GM10248 (cell line): ENCODE measurements at regions of chr9 and their contacts with region 1.

Region 1: GRCh38 chr9:114291064-114291474 is 31.8 kb upstream of the ORM1 start:
- DNase-seq: peak; percentile 76
- CTCF ChIP-seq: peak; percentile 93

Region 2: GRCh38 chr9:114108016-114108833 is 182.8 kb before region 1 on chr9:
- CTCF ChIA-PET with region 1: interaction called, 50 read pairs
- POLR2A ChIA-PET with region 1: no interaction called
- DNase-seq: peak; percentile 73
- CTCF ChIP-seq: peak; percentile 76

Region 3: DNA sequence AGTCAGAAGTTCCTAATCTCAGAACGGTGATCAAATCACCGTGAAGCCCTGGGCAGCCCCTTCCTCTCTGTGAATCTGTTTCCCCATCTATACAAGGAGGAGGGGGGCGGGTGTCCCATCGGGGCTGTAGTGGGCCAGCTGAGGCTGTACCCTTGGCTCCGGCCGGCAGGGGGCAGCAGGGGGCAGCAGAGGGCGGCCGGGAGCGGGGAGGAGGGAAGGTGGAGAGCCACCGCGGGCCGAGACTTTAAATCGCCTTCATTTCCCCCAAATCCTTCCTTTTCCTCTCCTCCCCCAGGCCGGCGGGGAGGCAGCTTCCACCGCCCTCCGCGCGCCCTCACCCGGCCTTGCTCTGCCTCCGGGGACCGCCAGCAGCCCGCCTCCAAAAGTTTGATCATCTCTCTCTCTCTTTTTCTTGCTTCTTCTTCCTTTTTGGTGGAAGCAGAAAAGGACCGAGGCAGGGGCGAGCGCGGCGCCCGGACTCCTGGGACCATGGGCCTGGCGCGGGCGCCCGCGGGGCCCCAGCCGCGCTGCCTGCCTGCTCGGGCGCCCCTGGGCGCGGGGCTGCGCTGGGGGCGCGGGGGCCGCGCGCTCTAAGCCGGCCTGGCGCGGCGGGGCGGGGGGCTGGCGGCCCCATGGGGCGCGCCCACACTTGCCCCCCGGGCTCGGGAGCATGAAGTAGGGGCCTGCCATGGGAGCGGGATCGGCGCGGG is 135.7 kb before region 1 on chr9 and contains the start of gene COL27A1:
- CTCF ChIA-PET with region 1: interaction called, 24 read pairs
- POLR2A ChIA-PET with region 1: no interaction called
- DNase-seq: peak; percentile 90
- CTCF ChIP-seq: peak; percentile 92

Region 4: GRCh38 chr9:114250235-114250568 is 40.9 kb before region 1 on chr9:
- CTCF ChIA-PET with region 1: interaction called, 10 read pairs
- POLR2A ChIA-PET with region 1: no interaction called
- DNase-seq: no peak
- CTCF ChIP-seq: no peak

Region 5: DNA sequence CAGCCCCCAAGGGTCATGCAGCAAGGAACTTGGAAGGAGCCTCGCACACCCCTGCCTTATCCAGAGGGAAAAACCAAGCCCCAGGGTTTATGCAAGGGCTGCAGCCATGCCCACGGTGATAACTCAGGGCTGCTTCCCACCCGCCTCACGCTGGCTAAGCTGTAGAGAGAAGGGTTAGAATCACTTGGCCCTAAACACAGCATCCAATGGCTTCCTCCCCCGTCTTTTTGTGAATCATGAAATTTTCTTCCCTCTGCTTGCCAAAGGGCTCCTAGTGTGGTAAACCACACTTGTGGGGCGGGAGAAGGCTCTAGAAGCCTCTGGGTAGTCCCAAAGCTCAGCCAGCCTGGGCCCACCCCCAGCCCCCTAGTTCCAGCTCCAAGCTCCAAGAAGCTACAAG is 24.1 kb before region 1 on chr9:
- CTCF ChIA-PET with region 1: interaction called, 17 read pairs
- POLR2A ChIA-PET with region 1: no interaction called
- DNase-seq: no peak
- CTCF ChIP-seq: no peak

Region 6: GRCh38 chr9:114275246-114276004 is 15.6 kb before region 1 on chr9:
- CTCF ChIA-PET with region 1: interaction called, 18 read pairs
- POLR2A ChIA-PET with region 1: no interaction called
- DNase-seq: no peak
- CTCF ChIP-seq: no peak

Region 7: DNA sequence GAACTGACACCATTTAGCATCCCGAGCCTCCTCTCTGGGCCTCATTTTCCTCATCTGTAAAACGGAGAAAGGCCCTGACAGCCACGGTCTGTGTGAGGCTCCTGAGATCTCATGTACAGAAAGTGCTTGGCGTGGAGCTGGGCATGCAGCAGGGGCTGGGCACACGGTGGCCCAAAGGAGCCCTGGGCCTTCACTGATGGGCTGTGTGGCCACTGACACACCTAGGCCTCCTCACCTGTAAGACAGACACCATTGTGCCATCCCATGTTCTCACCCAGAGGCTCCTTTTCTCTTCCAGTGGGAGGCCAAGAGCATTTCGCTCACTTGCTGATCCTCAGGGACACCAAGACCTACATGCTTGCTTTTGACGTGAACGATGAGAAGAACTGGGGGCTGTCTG is 33.4 kb after region 1 on chr9:
- CTCF ChIA-PET with region 1: interaction called, 13 read pairs
- POLR2A ChIA-PET with region 1: no interaction called
- DNase-seq: no peak
- CTCF ChIP-seq: no peak

Region 8: DNA sequence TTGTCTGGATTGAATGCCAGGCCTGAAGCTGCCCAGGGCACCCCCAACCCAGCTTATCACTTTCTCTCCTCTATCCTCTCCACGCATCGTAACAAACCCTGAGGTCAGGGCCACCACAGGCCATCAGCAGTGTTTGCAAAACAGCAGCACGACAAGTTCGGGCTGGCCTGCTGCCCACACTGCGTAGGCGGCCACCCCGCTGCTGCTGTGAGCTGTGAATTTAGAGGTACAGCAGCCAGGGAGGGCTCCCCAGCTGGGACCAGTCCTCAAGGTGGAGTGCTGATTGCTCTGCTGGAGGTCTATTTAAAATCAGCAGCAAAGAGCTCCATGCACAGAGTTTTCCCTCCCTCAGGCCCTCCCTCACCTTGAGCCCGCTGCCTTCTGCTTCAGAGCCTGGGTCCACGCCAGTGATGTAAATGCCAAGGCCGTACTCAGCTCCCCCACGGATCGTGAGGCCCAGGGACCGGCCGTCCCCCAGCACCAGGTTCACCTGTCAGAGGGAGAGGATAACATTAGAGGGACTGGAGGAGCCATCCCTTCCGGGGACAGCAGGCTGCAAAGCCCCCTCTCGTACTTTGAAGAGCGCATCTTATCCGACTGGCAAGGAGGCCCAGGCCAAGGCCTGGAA is 174.9 kb after region 1 on chr9:
- CTCF ChIA-PET with region 1: no interaction called
- POLR2A ChIA-PET with region 1: no interaction called
- DNase-seq: no peak
- CTCF ChIP-seq: no peak